ENCODE measurements at regions of chr19 and their contacts with region 1.

Region 1: DNA sequence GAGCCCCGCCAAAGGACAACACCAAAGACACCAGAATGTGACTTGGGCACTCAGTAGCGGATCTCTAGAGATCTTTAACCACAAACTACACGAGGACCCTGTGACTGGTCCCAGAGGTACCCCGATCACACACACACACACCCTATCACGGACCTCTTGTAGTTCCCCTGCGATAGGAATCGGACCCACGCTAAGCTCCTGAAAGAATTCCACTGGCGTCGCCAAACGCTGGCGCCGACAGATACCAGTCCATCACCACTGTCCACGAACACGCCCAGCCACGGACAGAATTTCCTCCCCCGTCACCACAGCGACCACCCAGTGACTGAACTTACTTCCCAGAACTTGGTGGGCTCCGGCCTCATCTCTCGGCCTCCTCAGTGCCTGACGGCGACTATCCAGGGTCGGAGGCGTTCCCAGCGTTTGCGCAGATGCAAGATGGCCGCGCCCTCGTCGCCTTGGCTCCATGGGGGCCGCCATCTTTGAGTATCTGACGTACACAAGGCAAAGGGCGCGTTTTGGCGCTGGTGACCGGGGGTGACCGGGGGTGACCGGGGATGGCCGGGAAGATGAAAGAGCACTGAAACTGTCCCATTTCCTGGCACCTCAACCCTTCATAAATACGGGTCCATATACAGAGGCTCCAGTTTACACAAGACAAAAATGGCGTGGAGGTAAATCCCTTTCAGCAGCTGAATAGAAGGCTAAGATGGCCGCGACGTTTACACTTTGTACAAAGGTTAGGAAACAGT is at the start of gene ZNF615:
- DNase-seq: peak; percentile 87
- H3K4me3 Mint-ChIP-seq: peak within 1 kb of the TSS; percentile 93
- H3K27ac Mint-ChIP-seq: peak within 1 kb of the TSS; percentile 92
- H3K4me1 Mint-ChIP-seq: peaks cover 19% of the 10 kb centered on the region
- H3K27me3 Mint-ChIP-seq: no peaks in the 10 kb centered on the region
- total RNA-seq, gene ZNF615: 11.4 to 12.1 TPM

Region 2: DNA sequence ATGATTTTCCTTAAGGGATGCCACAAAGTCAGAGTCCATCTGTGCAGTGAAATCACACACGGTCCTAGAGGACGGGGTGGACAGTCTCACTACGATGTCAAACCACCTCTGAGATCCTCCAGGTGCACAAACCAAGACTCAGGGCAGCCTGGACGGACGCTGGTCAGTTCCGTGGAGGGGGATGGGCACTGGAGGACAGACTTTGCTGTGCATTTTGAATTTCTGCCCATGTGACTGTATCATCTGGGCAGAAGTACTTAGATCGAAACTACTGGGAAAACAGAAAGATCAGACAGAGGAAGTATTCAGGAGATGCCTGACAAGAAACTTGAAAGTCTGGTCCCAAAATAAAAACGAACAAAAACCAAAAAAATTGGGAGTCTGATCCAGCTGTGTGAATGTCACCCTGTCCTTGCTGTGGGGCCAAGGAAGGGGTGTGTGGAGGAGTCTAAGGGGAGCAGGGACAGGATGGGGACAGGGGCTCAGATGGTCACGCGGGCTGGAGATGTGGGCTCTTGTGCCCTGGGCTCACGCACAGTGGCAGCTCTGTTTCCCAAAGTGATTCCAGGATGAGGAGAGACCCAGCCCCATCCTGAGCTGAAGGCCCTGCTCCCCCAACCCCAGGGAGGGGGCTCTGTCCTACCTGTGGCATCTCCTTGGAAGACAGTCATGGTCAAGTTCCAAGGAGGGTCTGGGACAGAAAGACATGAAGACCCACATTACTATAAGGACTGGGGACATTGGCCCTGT is 551.3 kb before region 1 on chr19:
- CTCF ChIA-PET with region 1: no interaction called
- POLR2A ChIA-PET with region 1: no interaction called
- DNase-seq: no peak
- H3K4me3 Mint-ChIP-seq: no peak overlapping the region
- H3K27ac Mint-ChIP-seq: no peak overlapping the region
- H3K4me1 Mint-ChIP-seq: no peaks in the 10 kb centered on the region
- H3K27me3 Mint-ChIP-seq: peaks cover 2% of the 10 kb centered on the region

Region 3: DNA sequence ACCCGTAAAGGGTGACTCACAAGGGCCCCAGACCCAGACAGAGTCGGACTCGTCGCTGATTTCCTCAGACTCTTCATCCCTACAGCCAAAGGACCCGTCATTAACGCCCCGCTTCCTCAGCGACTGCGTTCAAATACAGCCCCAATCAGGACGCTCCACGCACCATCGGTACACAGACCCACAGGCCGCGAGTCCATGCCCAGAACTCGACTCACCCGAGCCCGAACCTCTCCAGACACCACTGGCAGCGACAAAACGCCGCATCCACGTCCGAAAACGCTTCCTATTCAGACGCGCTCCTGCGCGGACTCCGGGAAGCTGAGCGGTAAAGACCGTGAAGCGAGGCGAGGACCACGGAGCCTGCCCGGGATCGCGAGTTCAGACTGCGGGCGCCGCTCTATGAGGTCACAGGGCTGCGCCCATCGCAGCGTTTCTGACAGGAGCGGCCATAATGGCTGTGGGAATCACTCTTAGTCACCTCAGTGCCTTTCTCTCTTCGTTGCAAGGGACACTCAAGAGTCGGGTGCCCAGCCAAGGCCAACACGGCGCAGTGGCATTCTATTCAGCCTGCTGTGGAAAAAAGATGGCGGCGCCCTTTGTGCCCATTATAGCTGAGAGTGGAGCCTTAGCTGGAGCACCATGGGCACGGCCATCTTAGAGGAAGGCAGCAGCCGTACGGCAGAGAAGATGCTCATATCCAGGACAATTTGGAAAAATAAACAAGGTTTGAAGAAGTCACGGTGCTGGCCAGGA is 20.2 kb after region 1 on chr19 and contains the start of gene ZNF614:
- CTCF ChIA-PET with region 1: no interaction called
- POLR2A ChIA-PET with region 1: interaction called, 18 read pairs
- DNase-seq: peak; percentile 88
- H3K4me3 Mint-ChIP-seq: peak within 1 kb of the TSS; percentile 89
- H3K27ac Mint-ChIP-seq: peak within 1 kb of the TSS; percentile 97
- H3K4me1 Mint-ChIP-seq: peaks cover 25% of the 10 kb centered on the region
- H3K27me3 Mint-ChIP-seq: no peaks in the 10 kb centered on the region
- total RNA-seq, gene ZNF614: 8.0 to 8.2 TPM

Measured in activated CD4-positive, alpha-beta memory T cell treated with anti-CD3 and anti-CD28 coated beads, Interleukin-2, amount 10 ng/mL, durations not matched to agents 7 days and 5 days (primary cell).